Naive thymus-derived CD4-positive, alpha-beta T cell (primary cell): ENCODE measurements at regions of chr4 and their contacts with region 1.

Region 1: GRCh38 chr4:156929386-156930105 is 42.1 kb downstream of the PDGFC start:
- DNase-seq: no peak
- ATAC-seq: no peak
- H3K4me3 ChIP-seq: no peak overlapping the region
- H3K4me3 Mint-ChIP-seq: no peak overlapping the region
- H3K27ac ChIP-seq: no peak overlapping the region
- H3K27ac Mint-ChIP-seq: no peak overlapping the region
- H3K4me1 ChIP-seq: no peaks in the 10 kb centered on the region
- H3K4me1 Mint-ChIP-seq: no peaks in the 10 kb centered on the region
- H3K27me3 ChIP-seq: no peaks in the 10 kb centered on the region
- H3K27me3 Mint-ChIP-seq: no peaks in the 10 kb centered on the region

Region 2: DNA sequence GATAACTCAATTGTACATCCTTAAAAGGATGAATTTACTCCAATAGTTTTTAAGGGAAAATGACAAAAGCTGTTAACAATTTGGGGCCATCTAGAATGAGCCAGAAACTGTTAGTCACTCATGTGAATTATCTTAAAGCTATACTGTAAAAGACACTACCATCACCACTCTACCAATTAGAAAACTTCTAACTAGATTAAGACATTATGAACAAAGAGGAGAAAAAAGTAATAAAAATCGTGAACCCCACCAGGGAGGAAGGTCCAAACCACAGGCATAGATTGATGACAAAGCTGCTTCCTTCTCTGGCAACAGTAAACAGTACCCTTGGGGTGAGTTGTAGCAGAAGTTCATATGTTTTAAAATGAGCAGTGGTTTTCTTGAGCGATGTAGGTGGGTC is 64.1 kb before region 1 on chr4:
- CTCF ChIA-PET with region 1: no interaction called
- POLR2A ChIA-PET with region 1: no interaction called
- intact Hi-C with region 1: loop called in 1 of 2 experiments (anchors 10 kb)
- DNase-seq: no peak
- ATAC-seq: no peak
- H3K4me3 ChIP-seq: no peak overlapping the region
- H3K4me3 Mint-ChIP-seq: no peak overlapping the region
- H3K27ac ChIP-seq: no peak overlapping the region
- H3K27ac Mint-ChIP-seq: no peak overlapping the region
- H3K4me1 ChIP-seq: no peaks in the 10 kb centered on the region
- H3K4me1 Mint-ChIP-seq: no peaks in the 10 kb centered on the region
- H3K27me3 ChIP-seq: no peaks in the 10 kb centered on the region
- H3K27me3 Mint-ChIP-seq: no peaks in the 10 kb centered on the region

Region 3: GRCh38 chr4:156946516-156947424 is 17.2 kb after region 1 on chr4:
- CTCF ChIA-PET with region 1: no interaction called
- POLR2A ChIA-PET with region 1: no interaction called
- intact Hi-C with region 1: no loop called
- DNase-seq: no peak
- ATAC-seq: peak; percentile 76
- H3K4me3 ChIP-seq: no peak overlapping the region
- H3K4me3 Mint-ChIP-seq: no peak overlapping the region
- H3K27ac ChIP-seq: no peak overlapping the region
- H3K27ac Mint-ChIP-seq: no peak overlapping the region
- H3K4me1 ChIP-seq: no peaks in the 10 kb centered on the region
- H3K4me1 Mint-ChIP-seq: no peaks in the 10 kb centered on the region
- H3K27me3 ChIP-seq: no peaks in the 10 kb centered on the region
- H3K27me3 Mint-ChIP-seq: no peaks in the 10 kb centered on the region